ENCODE measurements at regions of chr5 and their contacts with region 1.

Region 1: GRCh38 chr5:21739096-21739495 is 1114.0 kb downstream of the CDH12 start:
- DNase-seq: no peak
- H3K4me3 ChIP-seq: no peak overlapping the region
- H3K27ac ChIP-seq: no peak overlapping the region
- H3K4me1 ChIP-seq: no peaks in the 10 kb centered on the region
- H3K27me3 ChIP-seq: no peaks in the 10 kb centered on the region
- CTCF ChIP-seq: no peak

Region 2: GRCh38 chr5:21603796-21604195 is 135.3 kb before region 1 on chr5:
- CTCF ChIA-PET with region 1: no interaction called
- POLR2A ChIA-PET with region 1: interaction called, 16 read pairs
- intact Hi-C with region 1: no loop called
- DNase-seq: no peak
- H3K4me3 ChIP-seq: no peak overlapping the region
- H3K27ac ChIP-seq: no peak overlapping the region
- H3K4me1 ChIP-seq: no peaks in the 10 kb centered on the region
- H3K27me3 ChIP-seq: no peaks in the 10 kb centered on the region
- CTCF ChIP-seq: no peak